ENCODE measurements at regions of chr6 and their contacts with region 1.

Region 1: GRCh38 chr6:31546962-31547726 is at the start of gene NFKBIL1:
- DNase-seq: peak; percentile 94
- H3K4me3 ChIP-seq: peak within 1 kb of the TSS; percentile 49 to 53 (median 53)
- H3K27ac ChIP-seq: peak within 1 kb of the TSS; percentile 75
- H3K4me1 ChIP-seq: peaks cover 22% of the 10 kb centered on the region
- H3K27me3 ChIP-seq: no peaks in the 10 kb centered on the region
- CTCF ChIP-seq: no peak
- total RNA-seq, gene NFKBIL1: 22.0 to 24.2 TPM

Region 2: DNA sequence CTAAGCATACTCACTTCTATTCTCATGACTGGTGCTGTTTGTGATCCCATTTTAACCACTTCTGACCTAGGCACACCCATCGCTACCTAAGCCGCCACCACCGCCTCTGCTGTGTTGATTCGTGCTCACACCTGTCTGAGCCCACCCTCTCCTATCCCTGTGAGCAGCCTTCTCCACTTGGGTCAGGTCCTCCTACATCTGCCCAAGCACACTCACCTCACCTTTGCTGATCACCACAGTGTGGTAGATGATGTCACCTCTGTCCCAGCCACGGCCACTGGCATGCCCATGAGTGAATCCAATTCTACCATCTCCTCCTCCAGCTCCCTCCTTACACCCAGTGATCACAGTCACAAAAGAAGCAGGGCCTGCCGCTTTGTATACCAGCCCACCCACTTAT is 516.0 kb before region 1 on chr6:
- CTCF ChIA-PET with region 1: no interaction called
- dilution Hi-C with region 1: no loop called
- in situ Hi-C with region 1: no loop called
- intact Hi-C with region 1: no loop called
- DNase-seq: peak; percentile 29
- H3K4me3 ChIP-seq: no peak overlapping the region
- H3K27ac ChIP-seq: no peak overlapping the region
- H3K4me1 ChIP-seq: no peaks in the 10 kb centered on the region
- H3K27me3 ChIP-seq: no peaks in the 10 kb centered on the region
- CTCF ChIP-seq: no peak

Region 3: GRCh38 chr6:31403283-31403989 is 143.7 kb before region 1 on chr6 and contains the start of gene MICA:
- CTCF ChIA-PET with region 1: no interaction called
- dilution Hi-C with region 1: no loop called
- in situ Hi-C with region 1: no loop called
- intact Hi-C with region 1: loop called (anchors 5 kb)
- DNase-seq: peak; percentile 95
- H3K4me3 ChIP-seq: peak within 1 kb of the TSS; percentile 87 to 90 (median 88)
- H3K27ac ChIP-seq: peak within 1 kb of the TSS; percentile 95
- H3K4me1 ChIP-seq: peaks cover 19% of the 10 kb centered on the region
- H3K27me3 ChIP-seq: no peaks in the 10 kb centered on the region
- CTCF ChIP-seq: no peak
- total RNA-seq, gene MICA: 32.3 to 51.2 TPM

Region 4: DNA sequence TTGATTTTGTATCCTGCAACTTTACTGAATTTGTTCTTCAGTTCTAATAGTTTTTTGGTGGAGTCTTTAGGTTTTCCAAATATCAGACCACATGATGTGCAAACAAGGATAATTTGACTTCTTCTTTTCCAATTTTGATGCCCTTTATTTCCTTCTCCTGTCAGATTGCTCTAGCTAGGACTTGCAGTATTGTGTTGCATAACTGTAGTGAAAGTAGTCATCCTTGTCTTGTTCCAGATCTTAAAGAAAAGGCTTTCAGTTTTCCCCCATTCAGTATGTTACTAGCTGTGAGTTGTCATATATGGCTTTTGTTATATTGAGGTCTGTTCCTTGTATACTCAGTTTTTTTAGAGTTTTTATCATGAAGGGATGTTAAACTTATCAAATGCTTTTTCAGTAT is 44.6 kb before region 1 on chr6:
- CTCF ChIA-PET with region 1: no interaction called
- dilution Hi-C with region 1: no loop called
- in situ Hi-C with region 1: no loop called
- intact Hi-C with region 1: no loop called
- DNase-seq: no peak
- H3K4me3 ChIP-seq: no peak overlapping the region
- H3K27ac ChIP-seq: no peak overlapping the region
- H3K4me1 ChIP-seq: no peaks in the 10 kb centered on the region
- H3K27me3 ChIP-seq: no peaks in the 10 kb centered on the region
- CTCF ChIP-seq: no peak

Region 5: GRCh38 chr6:31573239-31574105 is 26.3 kb after region 1 on chr6:
- CTCF ChIA-PET with region 1: interaction called, 16 read pairs
- dilution Hi-C with region 1: no loop called
- in situ Hi-C with region 1: no loop called
- intact Hi-C with region 1: no loop called
- DNase-seq: no peak
- H3K4me3 ChIP-seq: no peak overlapping the region
- H3K27ac ChIP-seq: no peak overlapping the region
- H3K4me1 ChIP-seq: peaks cover 10% of the 10 kb centered on the region
- H3K27me3 ChIP-seq: no peaks in the 10 kb centered on the region
- CTCF ChIP-seq: no peak

Region 6: GRCh38 chr6:31597006-31597405 is 49.9 kb after region 1 on chr6:
- CTCF ChIA-PET with region 1: interaction called, 4 read pairs
- dilution Hi-C with region 1: no loop called
- in situ Hi-C with region 1: loop called (anchors 5 kb)
- intact Hi-C with region 1: loop called (anchors 1 kb)
- DNase-seq: no peak
- H3K4me3 ChIP-seq: no peak overlapping the region
- H3K27ac ChIP-seq: no peak overlapping the region
- H3K4me1 ChIP-seq: no peaks in the 10 kb centered on the region
- H3K27me3 ChIP-seq: no peaks in the 10 kb centered on the region
- CTCF ChIP-seq: peak; percentile 26 to 27

Region 7: GRCh38 chr6:31652925-31653718 is 106.0 kb after region 1 on chr6:
- CTCF ChIA-PET with region 1: no interaction called
- dilution Hi-C with region 1: loop called (anchors 5 kb)
- in situ Hi-C with region 1: no loop called
- intact Hi-C with region 1: loop called (anchors 1 kb)
- DNase-seq: no peak
- H3K4me3 ChIP-seq: peak overlapping the region; percentile 62 to 95 (median 83)
- H3K27ac ChIP-seq: peak overlapping the region; percentile 75
- H3K4me1 ChIP-seq: peaks cover 15% of the 10 kb centered on the region
- H3K27me3 ChIP-seq: no peaks in the 10 kb centered on the region
- CTCF ChIP-seq: peak in 1 of 2 donors; percentile 1

Region 8: DNA sequence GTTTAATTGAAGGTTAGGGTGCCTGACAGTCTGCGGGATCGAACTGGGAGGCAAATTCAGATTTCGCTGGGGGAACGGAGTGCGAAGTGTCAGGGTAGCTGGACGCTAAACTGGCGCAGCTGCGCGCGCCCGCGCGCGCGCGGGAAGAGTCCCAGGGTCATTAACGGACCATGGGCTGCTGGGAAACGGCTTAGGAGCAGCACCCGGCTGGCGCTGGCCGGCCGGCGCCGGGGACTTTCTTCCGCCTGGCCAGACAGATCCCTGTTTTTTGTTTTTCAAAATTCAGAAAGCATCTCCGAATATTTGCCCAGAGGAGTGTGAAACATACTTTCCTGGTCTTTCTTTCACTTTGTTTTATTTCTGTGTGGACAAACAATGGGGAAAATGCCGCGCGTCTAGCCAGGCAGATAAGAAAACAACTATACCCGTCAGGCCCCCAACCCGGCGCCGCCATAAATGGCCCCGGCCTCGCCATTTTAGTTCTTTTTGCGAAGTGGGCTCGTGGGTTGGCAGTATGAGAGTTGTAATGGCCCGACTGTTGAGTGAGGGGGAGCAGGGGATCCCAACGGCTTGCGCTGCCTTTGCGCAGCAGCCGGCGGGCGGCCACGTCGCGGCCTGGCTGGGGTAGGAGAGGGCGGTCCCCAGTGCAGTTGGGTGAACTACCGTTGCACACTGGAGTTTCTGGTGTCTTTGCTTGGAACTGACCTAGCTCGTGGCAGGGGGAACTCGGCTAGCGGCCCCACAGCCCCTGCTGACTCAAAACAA is 287.5 kb after region 1 on chr6:
- CTCF ChIA-PET with region 1: no interaction called
- dilution Hi-C with region 1: no loop called
- in situ Hi-C with region 1: no loop called
- intact Hi-C with region 1: loop called (anchors 1 kb)
- DNase-seq: peak; percentile 86
- H3K4me3 ChIP-seq: peak overlapping the region; percentile 73 to 96 (median 82)
- H3K27ac ChIP-seq: peak overlapping the region; percentile 95
- H3K4me1 ChIP-seq: peaks cover 27% of the 10 kb centered on the region
- H3K27me3 ChIP-seq: no peaks in the 10 kb centered on the region
- CTCF ChIP-seq: no peak

Region 9: GRCh38 chr6:32118782-32119628 is 571.9 kb after region 1 on chr6:
- CTCF ChIA-PET with region 1: no interaction called
- dilution Hi-C with region 1: no loop called
- in situ Hi-C with region 1: no loop called
- intact Hi-C with region 1: no loop called
- DNase-seq: peak; percentile 65
- H3K4me3 ChIP-seq: no peak overlapping the region
- H3K27ac ChIP-seq: no peak overlapping the region
- H3K4me1 ChIP-seq: peaks cover 5% of the 10 kb centered on the region
- H3K27me3 ChIP-seq: no peaks in the 10 kb centered on the region
- CTCF ChIP-seq: peak; percentile 88 to 90

Measured in mammary epithelial cell (primary cell).